Psoas muscle (tissue), 8 donors: ENCODE measurements at regions of chr17 and their contacts with region 1.

Region 1: DNA sequence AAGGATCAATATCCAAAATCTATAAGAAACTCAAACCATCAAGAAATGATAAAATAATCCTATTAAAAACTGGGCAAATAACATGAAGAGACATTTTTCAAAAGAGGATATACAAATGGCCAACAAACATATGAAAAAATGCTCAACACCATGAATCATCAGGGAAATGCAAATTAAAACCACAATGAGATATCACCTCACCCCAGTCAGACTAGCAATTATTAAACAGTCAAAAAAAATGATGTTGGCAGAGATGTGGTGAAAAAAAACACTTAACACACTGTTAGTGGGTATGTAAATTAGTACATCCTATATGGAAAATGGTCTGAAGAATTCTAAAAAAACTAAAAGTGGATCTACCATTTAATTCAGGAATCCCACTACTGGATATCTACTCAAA is 379.0 kb upstream of the SOX9 start:
- DNase-seq: no peak
- ATAC-seq: no peak
- H3K4me3 ChIP-seq: no peak overlapping the region
- H3K27ac ChIP-seq: no peak overlapping the region
- H3K4me1 ChIP-seq: no peaks in the 10 kb centered on the region
- H3K27me3 ChIP-seq: peaks cover 0 to 3% (median 0%) of the 10 kb centered on the region in 3 donors
- CTCF ChIP-seq: no peak

Region 2: GRCh38 chr17:71725811-71726210 is 16.0 kb before region 1 on chr17:
- intact Hi-C with region 1: loop called in 1 of 2 experiments (anchors 1 kb)
- DNase-seq: no peak
- ATAC-seq: no peak
- H3K4me3 ChIP-seq: no peak overlapping the region
- H3K27ac ChIP-seq: no peak overlapping the region
- H3K4me1 ChIP-seq: no peaks in the 10 kb centered on the region
- H3K27me3 ChIP-seq: no peaks in the 10 kb centered on the region
- CTCF ChIP-seq: no peak